ENCODE measurements at regions of chr17 and their contacts with region 1.

Region 1: GRCh38 chr17:39872751-39873150 is 4.7 kb downstream of the ZPBP2 start:
- DNase-seq: no peak
- ATAC-seq: 0 out of 3 replicates have a peak, but pooled peaks have one; percentile 19
- H3K4me3 ChIP-seq: no peak overlapping the region
- H3K27ac ChIP-seq: no peak overlapping the region; the same call in 1 of the 2 replicates
- H3K4me1 ChIP-seq: peaks cover 32% of the 10 kb centered on the region
- H3K27me3 ChIP-seq: no peaks in the 10 kb centered on the region
- CTCF ChIP-seq: peak in 2 of 3 experiments; percentile 19; a peak in 2 of 6 replicates
- EP300 ChIP-seq: no peak
- POLR2A ChIP-seq: no peak
- RAD21 ChIP-seq: peak; percentile 62

Region 2: DNA sequence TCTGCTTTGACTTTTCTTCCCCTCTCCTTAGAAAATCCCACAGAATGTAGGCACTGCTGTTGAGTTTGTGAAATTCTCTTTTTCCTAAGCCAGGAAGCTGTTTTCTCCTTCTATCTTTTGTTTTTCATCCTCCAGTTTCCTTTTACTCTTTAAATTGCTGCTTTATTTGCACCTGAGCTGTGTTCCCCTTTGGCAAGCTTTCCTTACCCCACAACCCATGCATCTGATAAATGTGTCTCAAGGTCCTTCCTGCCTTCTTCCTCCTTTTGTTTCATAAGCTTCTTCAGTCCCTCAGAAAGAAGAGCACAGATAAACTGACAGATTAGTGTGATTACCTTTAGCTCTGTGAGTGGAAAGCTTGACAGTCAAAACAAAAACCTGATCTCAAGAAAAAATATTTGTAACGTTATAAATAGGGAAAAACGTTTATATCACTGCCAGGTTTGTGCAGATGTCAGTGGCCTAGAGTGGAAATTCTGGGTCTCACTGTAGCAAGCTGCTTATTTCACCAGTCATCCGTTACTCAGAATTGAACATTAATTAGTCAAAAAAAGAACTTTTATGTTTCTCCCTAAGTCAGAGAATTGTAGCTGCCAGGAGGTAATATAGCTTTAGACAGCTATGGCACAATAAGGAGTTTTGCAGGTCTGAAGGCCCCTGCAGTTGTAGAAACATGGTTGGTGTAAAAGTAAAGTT is 22.1 kb after region 1 on chr17:
- CTCF ChIA-PET with region 1: interaction called, 14 read pairs
- POLR2A ChIA-PET with region 1: interaction called, 5 read pairs
- RAD21 ChIA-PET with region 1: no interaction called
- SMC1A ChIA-PET with region 1: interaction called, 9 read pairs
- in situ Hi-C with region 1: no loop called
- intact Hi-C with region 1: no loop called
- DNase-seq: no peak
- ATAC-seq: no peak
- H3K4me3 ChIP-seq: no peak overlapping the region
- H3K27ac ChIP-seq: no peak overlapping the region
- H3K4me1 ChIP-seq: no peaks in the 10 kb centered on the region
- H3K27me3 ChIP-seq: no peaks in the 10 kb centered on the region
- CTCF ChIP-seq: no peak
- EP300 ChIP-seq: no peak
- POLR2A ChIP-seq: no peak
- RAD21 ChIP-seq: no peak

Region 3: DNA sequence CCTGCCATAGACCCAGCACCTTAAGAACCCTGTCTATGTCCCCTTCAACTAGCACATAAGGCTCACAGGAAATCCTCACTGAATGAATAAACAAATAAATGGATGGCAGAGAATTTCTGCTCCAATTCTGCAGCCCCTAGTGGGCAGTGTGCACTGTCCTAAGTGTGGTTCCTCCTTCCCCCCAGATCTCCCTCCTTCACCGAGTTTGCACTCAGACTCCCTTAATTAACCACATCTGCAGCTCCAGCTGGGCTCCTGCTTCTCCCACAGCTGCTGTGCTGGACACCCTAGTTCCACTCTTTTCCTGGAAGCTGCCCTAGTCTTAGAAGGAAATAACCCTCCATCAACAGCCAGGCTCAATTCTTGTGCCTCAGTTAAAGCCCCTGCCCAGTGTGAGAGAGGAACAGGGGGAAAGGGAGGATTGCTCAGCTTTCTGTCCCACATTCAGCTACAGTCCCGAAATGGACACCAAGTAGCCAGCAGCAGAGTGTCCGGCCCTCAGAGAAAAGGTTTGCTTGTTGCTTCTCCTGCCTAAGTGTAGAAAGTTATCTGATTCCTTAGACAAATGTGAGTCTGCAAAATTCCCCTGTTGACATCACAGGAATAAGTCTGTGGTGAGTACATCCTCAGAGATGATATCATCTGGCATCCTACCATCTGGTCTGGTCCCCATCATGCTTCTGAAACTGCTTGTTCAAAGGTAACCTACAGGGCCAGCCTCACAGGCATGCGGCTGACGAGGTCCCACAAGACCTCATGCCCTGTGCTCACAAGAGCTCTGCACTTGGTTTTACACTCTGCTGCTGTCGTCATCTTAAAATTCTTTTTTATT is 67.1 kb after region 1 on chr17:
- CTCF ChIA-PET with region 1: interaction called, 12 read pairs
- POLR2A ChIA-PET with region 1: interaction called, 3 read pairs
- RAD21 ChIA-PET with region 1: interaction called, 7 read pairs
- SMC1A ChIA-PET with region 1: interaction called, 39 read pairs
- in situ Hi-C with region 1: no loop called
- intact Hi-C with region 1: no loop called
- DNase-seq: peak; percentile 71
- ATAC-seq: peak; percentile 88
- H3K4me3 ChIP-seq: no peak overlapping the region
- H3K27ac ChIP-seq: peak overlapping the region; percentile 23
- H3K4me1 ChIP-seq: peaks cover 17% of the 10 kb centered on the region
- H3K27me3 ChIP-seq: no peaks in the 10 kb centered on the region
- CTCF ChIP-seq: peak; percentile 49 to 54 (median 50); a peak in 4 of 6 replicates
- EP300 ChIP-seq: peak; percentile 18 to 56; a peak in 2 of 4 replicates
- POLR2A ChIP-seq: no peak
- RAD21 ChIP-seq: peak; percentile 31; the same call in 1 of the 2 replicates

Region 4: GRCh38 chr17:39963829-39964228 is 91.1 kb after region 1 on chr17:
- CTCF ChIA-PET with region 1: interaction called, 44 read pairs
- POLR2A ChIA-PET with region 1: no interaction called
- RAD21 ChIA-PET with region 1: interaction called, 11 read pairs
- SMC1A ChIA-PET with region 1: interaction called, 10 read pairs
- in situ Hi-C with region 1: no loop called
- intact Hi-C with region 1: loop called (anchors 2 kb)
- DNase-seq: no peak
- ATAC-seq: no peak
- H3K4me3 ChIP-seq: no peak overlapping the region
- H3K27ac ChIP-seq: no peak overlapping the region
- H3K4me1 ChIP-seq: no peaks in the 10 kb centered on the region; the same call in 1 of the 2 replicates
- H3K27me3 ChIP-seq: no peaks in the 10 kb centered on the region
- CTCF ChIP-seq: no peak
- EP300 ChIP-seq: no peak
- POLR2A ChIP-seq: no peak
- RAD21 ChIP-seq: no peak

Region 5: GRCh38 chr17:39980351-39981206 is 107.8 kb after region 1 on chr17 and contains the start of gene PSMD3:
- CTCF ChIA-PET with region 1: interaction called, 81 read pairs
- POLR2A ChIA-PET with region 1: interaction called, 9 read pairs
- RAD21 ChIA-PET with region 1: interaction called, 44 read pairs
- SMC1A ChIA-PET with region 1: interaction called, 38 read pairs
- in situ Hi-C with region 1: no loop called
- intact Hi-C with region 1: loop called (anchors 2 kb)
- DNase-seq: peak; percentile 100
- ATAC-seq: peak; percentile 94
- H3K4me3 ChIP-seq: peak within 1 kb of the TSS; percentile 90
- H3K27ac ChIP-seq: peak within 1 kb of the TSS; percentile 90
- H3K4me1 ChIP-seq: peaks cover 6% of the 10 kb centered on the region
- H3K27me3 ChIP-seq: no peaks in the 10 kb centered on the region; a peak in 1 of 4 replicates
- CTCF ChIP-seq: peak; percentile 80 to 97 (median 92)
- EP300 ChIP-seq: peak; percentile 21 to 44; a peak in 1 of 4 replicates
- POLR2A ChIP-seq: peak; percentile 93
- RAD21 ChIP-seq: peak; percentile 92
- polyA plus RNA-seq, gene PSMD3: 2.2 to 2.6 TPM